ENCODE measurements at regions of chr2 and their contacts with region 1.

Region 1: DNA sequence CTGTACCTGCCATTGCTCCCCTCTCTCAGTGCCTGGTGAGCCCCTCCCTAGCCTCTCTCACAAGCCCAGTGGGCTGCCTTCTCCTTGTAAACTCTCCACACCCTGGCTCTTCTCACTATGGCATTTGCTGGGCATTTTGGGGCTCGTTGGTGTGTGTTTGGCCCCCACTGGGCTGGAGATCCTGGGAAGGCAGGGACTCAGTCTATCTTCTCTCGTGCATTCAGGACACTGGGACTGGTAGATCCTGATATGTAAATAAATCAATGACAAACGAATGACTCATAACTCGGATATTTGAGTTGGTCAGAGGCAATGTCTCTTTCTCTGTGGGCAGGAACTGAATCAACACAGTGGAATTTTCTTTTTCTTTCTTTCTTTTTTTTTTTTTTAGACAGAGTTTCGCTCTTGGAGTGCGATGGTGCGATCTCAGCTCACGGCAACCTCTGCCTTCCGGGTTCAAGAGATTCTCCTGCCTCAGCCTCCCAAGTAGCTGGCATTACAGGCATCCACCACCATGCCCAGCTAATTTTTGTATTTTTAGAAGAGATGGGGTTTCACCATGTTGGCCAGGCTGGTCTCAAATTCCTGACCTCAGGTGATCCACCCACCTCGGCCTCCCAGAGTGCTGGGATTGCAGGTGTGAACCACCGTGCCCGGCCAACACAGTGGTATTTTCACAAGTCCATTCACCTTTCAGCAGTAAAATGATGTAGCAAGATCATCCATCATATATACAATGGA is 144.6 kb upstream of the SPRED2 start:
- DNase-seq: no peak
- ATAC-seq: peak; percentile 53
- H3K4me3 Mint-ChIP-seq: no peak overlapping the region
- H3K27ac Mint-ChIP-seq: no peak overlapping the region
- H3K4me1 Mint-ChIP-seq: peaks cover 3% of the 10 kb centered on the region
- H3K27me3 Mint-ChIP-seq: peaks cover 9% of the 10 kb centered on the region

Region 2: GRCh38 chr2:65081232-65081685 is 495.8 kb before region 1 on chr2:
- CTCF ChIA-PET with region 1: no interaction called
- POLR2A ChIA-PET with region 1: no interaction called
- intact Hi-C with region 1: loop called in 1 of 2 experiments (anchors 5 kb)
- DNase-seq: no peak
- ATAC-seq: no peak
- H3K4me3 Mint-ChIP-seq: no peak overlapping the region
- H3K27ac Mint-ChIP-seq: peak overlapping the region; percentile 4
- H3K4me1 Mint-ChIP-seq: peaks cover 7% of the 10 kb centered on the region
- H3K27me3 Mint-ChIP-seq: no peaks in the 10 kb centered on the region

Region 3: DNA sequence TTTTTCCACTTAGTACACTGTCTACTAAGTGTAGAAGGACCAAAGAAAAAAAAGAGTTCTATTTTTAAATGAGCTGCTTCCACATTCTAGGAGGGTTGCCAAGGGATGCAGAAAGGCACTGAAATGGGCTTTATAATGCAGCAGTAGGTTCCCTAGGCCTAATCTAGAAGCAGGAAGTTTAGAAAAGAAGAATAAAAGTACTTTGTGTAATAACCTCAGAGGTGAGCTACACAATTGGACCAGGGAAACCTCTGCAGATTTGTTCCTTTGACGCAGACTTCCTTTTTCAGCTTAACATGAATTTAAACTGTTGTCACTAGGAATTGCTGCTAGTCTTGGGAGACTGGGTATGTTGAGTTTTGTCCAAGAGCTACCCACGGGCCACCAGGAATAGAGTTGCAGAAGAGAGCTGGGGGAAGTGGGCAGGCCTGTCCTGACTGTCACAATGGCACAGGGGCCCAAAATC is 412.6 kb before region 1 on chr2:
- CTCF ChIA-PET with region 1: no interaction called
- POLR2A ChIA-PET with region 1: no interaction called
- intact Hi-C with region 1: loop called in 1 of 2 experiments (anchors 5 kb)
- DNase-seq: no peak
- ATAC-seq: no peak
- H3K4me3 Mint-ChIP-seq: no peak overlapping the region
- H3K27ac Mint-ChIP-seq: no peak overlapping the region
- H3K4me1 Mint-ChIP-seq: peaks cover 21% of the 10 kb centered on the region
- H3K27me3 Mint-ChIP-seq: no peaks in the 10 kb centered on the region

Region 4: GRCh38 chr2:65186872-65187851 is 389.9 kb before region 1 on chr2:
- CTCF ChIA-PET with region 1: interaction called, 7 read pairs
- POLR2A ChIA-PET with region 1: no interaction called
- intact Hi-C with region 1: loop called in 1 of 2 experiments (anchors 5 kb)
- DNase-seq: peak; percentile 77
- ATAC-seq: peak; percentile 87
- H3K4me3 Mint-ChIP-seq: no peak overlapping the region
- H3K27ac Mint-ChIP-seq: no peak overlapping the region
- H3K4me1 Mint-ChIP-seq: peaks cover 4% of the 10 kb centered on the region
- H3K27me3 Mint-ChIP-seq: peaks cover 9% of the 10 kb centered on the region

Region 5: GRCh38 chr2:65264821-65265670 is 312.0 kb before region 1 on chr2:
- CTCF ChIA-PET with region 1: interaction called, 9 read pairs
- POLR2A ChIA-PET with region 1: no interaction called
- intact Hi-C with region 1: loop called (anchors 1 to 2 kb)
- DNase-seq: no peak
- ATAC-seq: peak; percentile 36
- H3K4me3 Mint-ChIP-seq: no peak overlapping the region
- H3K27ac Mint-ChIP-seq: no peak overlapping the region
- H3K4me1 Mint-ChIP-seq: peaks cover 11% of the 10 kb centered on the region
- H3K27me3 Mint-ChIP-seq: no peaks in the 10 kb centered on the region

Measured in activated CD4-positive, alpha-beta T cell treated with anti-CD3 and anti-CD28 coated beads for 36 hours (primary cell).